ENCODE measurements at regions of chr4 and their contacts with region 1.

Region 1: GRCh38 chr4:20684852-20685763 is 15.2 kb upstream of the PACRGL start:
- DNase-seq: no peak
- ATAC-seq: no peak
- H3K4me3 Mint-ChIP-seq: no peak overlapping the region
- H3K27ac Mint-ChIP-seq: no peak overlapping the region
- H3K4me1 Mint-ChIP-seq: no peaks in the 10 kb centered on the region
- H3K27me3 Mint-ChIP-seq: peaks cover 6% of the 10 kb centered on the region
- CTCF ChIP-seq: peak; percentile 89

Region 2: GRCh38 chr4:18689308-18690115 is 1995.6 kb before region 1 on chr4:
- CTCF ChIA-PET with region 1: no interaction called
- POLR2A ChIA-PET with region 1: no interaction called
- intact Hi-C with region 1: loop called (anchors 10 kb)
- DNase-seq: peak; percentile 62
- ATAC-seq: no peak
- H3K4me3 Mint-ChIP-seq: no peak overlapping the region
- H3K27ac Mint-ChIP-seq: no peak overlapping the region
- H3K4me1 Mint-ChIP-seq: no peaks in the 10 kb centered on the region
- H3K27me3 Mint-ChIP-seq: peaks cover 9% of the 10 kb centered on the region
- CTCF ChIP-seq: peak; percentile 91

Region 3: DNA sequence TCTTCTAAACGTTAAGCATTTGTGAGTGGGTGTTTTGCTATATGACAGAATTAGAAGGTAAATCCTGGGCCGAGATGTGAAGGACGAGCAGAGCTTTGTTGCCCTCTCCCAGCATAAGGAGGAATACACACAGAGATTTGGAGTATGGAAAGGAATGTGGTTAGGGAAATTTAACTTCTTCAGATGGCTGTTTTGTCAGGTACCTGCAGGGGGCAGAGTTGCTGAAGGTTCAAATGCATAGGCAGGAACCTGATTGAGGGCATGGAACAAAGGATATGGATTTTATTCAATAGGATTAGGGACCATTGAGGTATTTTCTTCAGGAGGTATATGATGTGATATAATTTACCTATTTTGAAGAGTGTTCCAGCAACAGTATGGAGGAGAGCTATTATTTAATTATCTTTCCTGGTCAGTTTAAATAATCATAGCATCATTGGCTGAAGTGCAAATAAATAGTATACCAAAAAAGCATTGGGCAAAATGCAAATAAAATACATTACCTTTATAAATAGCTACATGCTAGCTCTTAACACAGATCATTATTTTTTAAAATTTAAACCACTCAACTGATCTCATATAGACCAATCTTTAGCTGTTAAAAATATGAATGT is 289.8 kb before region 1 on chr4:
- CTCF ChIA-PET with region 1: interaction called, 12 read pairs
- POLR2A ChIA-PET with region 1: no interaction called
- intact Hi-C with region 1: no loop called
- DNase-seq: peak; percentile 45
- ATAC-seq: no peak
- H3K4me3 Mint-ChIP-seq: no peak overlapping the region
- H3K27ac Mint-ChIP-seq: no peak overlapping the region
- H3K4me1 Mint-ChIP-seq: no peaks in the 10 kb centered on the region
- H3K27me3 Mint-ChIP-seq: no peaks in the 10 kb centered on the region
- CTCF ChIP-seq: peak; percentile 68

Region 4: DNA sequence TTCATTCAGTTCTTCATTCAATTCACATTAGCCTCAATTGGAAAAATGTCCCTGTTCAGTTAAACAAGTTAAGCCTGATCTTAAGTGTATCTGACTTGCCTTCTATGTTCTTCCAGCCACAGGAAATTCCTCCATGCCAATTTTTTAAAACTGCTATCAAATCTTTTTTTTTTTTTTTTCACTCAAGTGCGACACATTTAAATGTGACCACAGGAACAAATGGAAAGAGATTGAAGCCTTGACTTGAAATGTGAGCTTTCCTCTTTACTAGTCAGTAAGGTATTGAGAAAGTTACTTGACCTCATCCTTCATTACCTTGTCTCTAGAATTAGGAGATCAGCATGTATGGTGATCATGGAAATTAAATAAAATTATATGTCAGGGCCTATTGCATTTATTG is 268.3 kb before region 1 on chr4:
- CTCF ChIA-PET with region 1: interaction called, 20 read pairs
- POLR2A ChIA-PET with region 1: no interaction called
- intact Hi-C with region 1: loop called (anchors 1 kb)
- DNase-seq: no peak
- ATAC-seq: no peak
- H3K4me3 Mint-ChIP-seq: no peak overlapping the region
- H3K27ac Mint-ChIP-seq: no peak overlapping the region
- H3K4me1 Mint-ChIP-seq: peaks cover 4% of the 10 kb centered on the region
- H3K27me3 Mint-ChIP-seq: no peaks in the 10 kb centered on the region
- CTCF ChIP-seq: no peak

Region 5: DNA sequence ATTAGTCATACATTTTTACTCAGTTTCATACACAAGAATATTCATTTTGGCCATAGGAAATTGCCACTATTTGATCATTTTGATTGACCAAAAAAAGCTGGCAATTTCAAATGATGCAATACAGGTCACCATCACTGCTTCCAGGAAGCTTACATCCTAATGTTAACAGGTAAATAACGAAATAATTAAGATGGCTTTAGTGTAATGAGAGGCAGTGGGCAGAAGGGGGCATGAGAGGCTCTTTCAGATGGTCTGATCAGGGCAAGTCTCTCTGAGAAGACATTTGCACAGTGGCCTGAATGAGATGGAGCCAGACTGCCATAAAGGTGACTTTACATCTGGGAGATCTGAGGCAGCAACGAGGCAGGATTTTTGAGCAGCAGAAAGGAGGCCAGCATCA is 262.7 kb before region 1 on chr4:
- CTCF ChIA-PET with region 1: interaction called, 20 read pairs
- POLR2A ChIA-PET with region 1: no interaction called
- intact Hi-C with region 1: loop called (anchors 1 kb)
- DNase-seq: peak; percentile 54
- ATAC-seq: peak; percentile 83
- H3K4me3 Mint-ChIP-seq: no peak overlapping the region
- H3K27ac Mint-ChIP-seq: no peak overlapping the region
- H3K4me1 Mint-ChIP-seq: peaks cover 4% of the 10 kb centered on the region
- H3K27me3 Mint-ChIP-seq: peaks cover 2% of the 10 kb centered on the region
- CTCF ChIP-seq: peak; percentile 69

Region 6: GRCh38 chr4:20652231-20652885 is 32.8 kb before region 1 on chr4:
- CTCF ChIA-PET with region 1: no interaction called
- POLR2A ChIA-PET with region 1: no interaction called
- intact Hi-C with region 1: no loop called
- DNase-seq: no peak
- ATAC-seq: no peak
- H3K4me3 Mint-ChIP-seq: no peak overlapping the region
- H3K27ac Mint-ChIP-seq: no peak overlapping the region
- H3K4me1 Mint-ChIP-seq: no peaks in the 10 kb centered on the region
- H3K27me3 Mint-ChIP-seq: peaks cover 4% of the 10 kb centered on the region
- CTCF ChIP-seq: no peak

Region 7: DNA sequence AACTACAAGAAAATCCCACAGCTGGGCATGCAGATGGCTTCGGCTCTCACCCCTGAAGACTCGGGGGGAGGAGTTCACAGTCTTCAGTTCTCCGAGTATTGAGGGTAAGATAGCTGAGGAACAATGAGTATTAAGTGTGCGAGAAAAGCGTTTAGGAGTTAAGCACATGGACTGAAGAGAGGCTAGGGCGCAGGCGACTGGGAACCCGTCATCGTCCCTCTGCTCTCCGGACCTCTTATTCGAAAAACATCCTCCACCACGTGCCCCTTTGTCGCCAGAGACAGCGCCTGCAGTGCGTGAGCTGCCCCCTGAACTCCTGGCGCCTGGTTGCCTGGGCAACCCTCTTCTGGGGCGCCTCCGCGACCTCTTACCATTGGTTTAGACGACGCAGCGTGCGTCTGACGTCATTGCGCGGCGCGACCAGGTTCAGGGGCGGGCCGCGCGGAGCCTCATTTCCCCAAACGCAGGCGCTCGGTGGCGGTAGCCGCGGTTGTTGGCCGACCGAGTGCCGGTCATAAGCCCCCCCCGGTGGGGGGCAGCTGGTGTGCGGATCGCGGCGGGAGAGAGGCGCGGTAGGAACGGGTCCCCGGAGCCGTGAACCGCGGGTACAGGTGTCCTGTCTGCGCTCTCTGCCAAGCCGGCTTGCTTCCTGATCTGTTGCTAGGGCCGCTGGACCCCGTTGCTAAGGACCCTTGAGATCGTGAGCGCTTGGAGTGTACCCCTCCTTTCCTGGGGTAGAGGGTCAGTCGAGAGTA is 15.1 kb after region 1 on chr4 and contains the start of gene PACRGL:
- CTCF ChIA-PET with region 1: interaction called, 23 read pairs
- POLR2A ChIA-PET with region 1: interaction called, 3 read pairs
- intact Hi-C with region 1: no loop called
- DNase-seq: peak; percentile 97
- ATAC-seq: peak; percentile 99
- H3K4me3 Mint-ChIP-seq: peak within 1 kb of the TSS; percentile 92
- H3K27ac Mint-ChIP-seq: peak within 1 kb of the TSS; percentile 95
- H3K4me1 Mint-ChIP-seq: peaks cover 29% of the 10 kb centered on the region
- H3K27me3 Mint-ChIP-seq: peaks cover 1% of the 10 kb centered on the region
- CTCF ChIP-seq: no peak
- total RNA-seq, gene PACRGL: 13.0 to 14.0 TPM